ENCODE measurements at regions of chrX and their contacts with region 1.

Region 1: GRCh38 chrX:33336783-33337182 is 125.4 kb upstream of the DMD start:
- DNase-seq: no peak
- ATAC-seq: no peak
- H3K4me3 ChIP-seq: no peak overlapping the region
- H3K27ac ChIP-seq: no peak overlapping the region
- H3K4me1 ChIP-seq: no peaks in the 10 kb centered on the region
- H3K27me3 ChIP-seq: no peaks in the 10 kb centered on the region
- CTCF ChIP-seq: peak; percentile 57

Region 2: DNA sequence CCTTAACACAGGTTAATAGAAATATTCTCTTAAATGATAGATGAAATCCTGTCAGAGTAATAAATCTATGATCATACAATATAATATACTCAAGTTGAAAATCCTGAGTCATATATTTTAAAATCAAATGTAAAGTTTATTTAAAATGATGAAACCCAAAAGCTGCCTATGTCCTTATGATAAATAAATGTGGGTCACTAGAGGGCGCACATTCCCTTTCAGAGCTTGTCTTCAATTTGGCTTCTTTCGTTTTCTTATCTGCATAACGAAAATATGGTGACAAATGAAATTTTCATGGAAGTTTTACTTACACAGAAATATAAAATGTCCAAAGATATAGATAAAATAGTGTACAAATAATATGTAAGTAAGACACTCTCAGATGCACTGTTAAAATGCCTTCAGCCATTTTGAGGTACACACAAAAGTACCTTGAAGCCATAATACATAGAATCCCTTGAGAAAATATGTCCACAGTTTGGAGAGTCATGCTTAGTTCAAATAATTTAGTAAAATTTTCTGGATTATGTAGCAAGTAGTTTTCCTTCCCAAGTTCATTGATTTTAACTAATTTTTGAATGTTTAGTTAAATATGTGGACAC is 805.9 kb before region 1 on chrX:
- CTCF ChIA-PET with region 1: no interaction called
- POLR2A ChIA-PET with region 1: no interaction called
- in situ Hi-C with region 1: no loop called
- intact Hi-C with region 1: loop called (anchors 5 kb)
- DNase-seq: no peak
- ATAC-seq: no peak
- H3K4me3 ChIP-seq: no peak overlapping the region
- H3K27ac ChIP-seq: no peak overlapping the region
- H3K4me1 ChIP-seq: no peaks in the 10 kb centered on the region
- H3K27me3 ChIP-seq: no peaks in the 10 kb centered on the region
- CTCF ChIP-seq: peak; percentile 53; the same call in 1 of the 2 replicates

Measured in Panc1 (cell line).